CD4-positive, alpha-beta T cell (primary cell): ENCODE measurements at regions of chr1 and their contacts with region 1.

Region 1: GRCh38 chr1:193767886-193768285 is 581.5 kb upstream of the B3GALT2 start:
- DNase-seq: no peak
- ATAC-seq: no peak
- H3K4me3 ChIP-seq: no peak overlapping the region
- H3K4me3 Mint-ChIP-seq: no peak overlapping the region
- H3K27ac ChIP-seq: no peak overlapping the region
- H3K27ac Mint-ChIP-seq: no peak overlapping the region
- H3K4me1 ChIP-seq: no peaks in the 10 kb centered on the region
- H3K4me1 Mint-ChIP-seq: no peaks in the 10 kb centered on the region
- H3K27me3 ChIP-seq: no peaks in the 10 kb centered on the region
- H3K27me3 Mint-ChIP-seq: no peaks in the 10 kb centered on the region
- CTCF ChIP-seq: no peak

Region 2: GRCh38 chr1:193417945-193418744 is 349.7 kb before region 1 on chr1:
- CTCF ChIA-PET with region 1: no interaction called
- POLR2A ChIA-PET with region 1: no interaction called
- intact Hi-C with region 1: loop called in 1 of 2 experiments (anchors 10 kb)
- DNase-seq: peak in 3 of 14 experiments; percentile 63 to 77 (median 63)
- ATAC-seq: peak; percentile 75
- H3K4me3 ChIP-seq: peak overlapping the region; percentile 56
- H3K4me3 Mint-ChIP-seq: peak overlapping the region; percentile 88
- H3K27ac ChIP-seq: peak overlapping the region; percentile 44 to 46
- H3K27ac Mint-ChIP-seq: peak overlapping the region; percentile 94
- H3K4me1 ChIP-seq: peaks cover 9% of the 10 kb centered on the region
- H3K4me1 Mint-ChIP-seq: peaks cover 51% of the 10 kb centered on the region
- H3K27me3 ChIP-seq: no peaks in the 10 kb centered on the region
- H3K27me3 Mint-ChIP-seq: no peaks in the 10 kb centered on the region
- CTCF ChIP-seq: no peak

Region 3: GRCh38 chr1:193448682-193449461 is 319.0 kb before region 1 on chr1:
- CTCF ChIA-PET with region 1: no interaction called
- POLR2A ChIA-PET with region 1: no interaction called
- intact Hi-C with region 1: no loop called
- DNase-seq: peak in 4 of 14 experiments; percentile 29 to 76 (median 46)
- ATAC-seq: peak; percentile 75
- H3K4me3 ChIP-seq: no peak overlapping the region
- H3K4me3 Mint-ChIP-seq: no peak overlapping the region
- H3K27ac ChIP-seq: peak overlapping the region in 1 of 2 donors; percentile 35
- H3K27ac Mint-ChIP-seq: peak overlapping the region; percentile 70
- H3K4me1 ChIP-seq: peaks cover 7% of the 10 kb centered on the region
- H3K4me1 Mint-ChIP-seq: peaks cover 13% of the 10 kb centered on the region
- H3K27me3 ChIP-seq: no peaks in the 10 kb centered on the region
- H3K27me3 Mint-ChIP-seq: no peaks in the 10 kb centered on the region
- CTCF ChIP-seq: no peak

Region 4: DNA sequence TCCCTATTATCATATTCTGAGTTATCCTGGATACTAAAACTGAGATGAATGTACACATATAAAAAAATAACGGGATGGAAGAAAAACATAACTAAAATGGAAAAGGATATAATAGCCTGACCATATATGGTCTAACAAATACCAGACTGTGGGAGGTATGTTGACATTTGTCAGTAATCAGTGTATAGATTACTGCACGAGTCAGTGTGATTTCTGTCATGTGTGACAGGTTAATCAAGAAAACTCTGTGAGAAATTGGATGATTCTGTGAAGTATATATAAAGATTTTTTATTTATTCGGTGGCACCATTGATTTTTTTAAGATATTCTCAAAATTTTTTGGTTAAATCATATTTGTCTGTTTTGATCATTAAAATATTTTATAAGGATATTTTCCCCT is 34.2 kb before region 1 on chr1:
- CTCF ChIA-PET with region 1: no interaction called
- POLR2A ChIA-PET with region 1: no interaction called
- intact Hi-C with region 1: loop called in 1 of 2 experiments (anchors 2 kb)
- DNase-seq: no peak
- ATAC-seq: no peak
- H3K4me3 ChIP-seq: no peak overlapping the region
- H3K4me3 Mint-ChIP-seq: no peak overlapping the region
- H3K27ac ChIP-seq: no peak overlapping the region
- H3K27ac Mint-ChIP-seq: no peak overlapping the region
- H3K4me1 ChIP-seq: no peaks in the 10 kb centered on the region
- H3K4me1 Mint-ChIP-seq: no peaks in the 10 kb centered on the region
- H3K27me3 ChIP-seq: no peaks in the 10 kb centered on the region
- H3K27me3 Mint-ChIP-seq: no peaks in the 10 kb centered on the region
- CTCF ChIP-seq: no peak